ENCODE measurements at regions of chr4 and their contacts with region 1.

Region 1: GRCh38 chr4:138870737-138871554 is 144.6 kb upstream of the NOCT start:
- DNase-seq: peak; percentile 66

Region 2: GRCh38 chr4:138680989-138681604 is 189.8 kb before region 1 on chr4:
- CTCF ChIA-PET with region 1: interaction called, 24 read pairs
- POLR2A ChIA-PET with region 1: no interaction called
- DNase-seq: peak; percentile 62

Region 3: DNA sequence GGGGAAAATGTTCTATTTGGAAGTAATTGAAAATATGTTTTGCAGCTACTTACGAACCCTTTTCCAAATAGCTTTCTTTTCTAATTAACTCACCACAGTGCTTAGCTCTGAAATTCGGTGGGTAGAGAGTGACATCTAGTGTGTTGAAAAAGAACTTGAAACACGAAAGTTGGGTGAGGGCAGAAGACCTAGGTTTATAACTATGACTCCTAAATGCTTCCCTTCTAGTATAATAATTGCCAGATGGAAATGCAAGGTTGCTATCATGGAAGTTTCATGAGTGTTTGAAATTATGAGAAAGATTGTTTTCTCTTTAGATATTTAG is 67.4 kb after region 1 on chr4:
- CTCF ChIA-PET with region 1: interaction called, 12 read pairs
- POLR2A ChIA-PET with region 1: no interaction called
- DNase-seq: peak; percentile 25